ENCODE measurements at regions of chr9 and their contacts with region 1.

Region 1: GRCh38 chr9:107340920-107341632 is 58.0 kb downstream of the RAD23B start:
- DNase-seq: peak; percentile 20 to 95 (median 72)
- ATAC-seq: peak; percentile 83
- H3K4me3 ChIP-seq: no peak overlapping the region
- H3K27ac ChIP-seq: no peak overlapping the region
- H3K4me1 ChIP-seq: peaks cover 0 to 6% of the 10 kb centered on the region in 2 donors
- H3K27me3 ChIP-seq: no peaks in the 10 kb centered on the region
- CTCF ChIP-seq: peak; percentile 74 to 85

Region 2: GRCh38 chr9:107094370-107094769 is 246.7 kb before region 1 on chr9:
- intact Hi-C with region 1: no loop called
- DNase-seq: no peak
- ATAC-seq: no peak
- H3K4me3 ChIP-seq: no peak overlapping the region
- H3K27ac ChIP-seq: no peak overlapping the region
- H3K4me1 ChIP-seq: no peaks in the 10 kb centered on the region
- H3K27me3 ChIP-seq: no peaks in the 10 kb centered on the region
- CTCF ChIP-seq: no peak

Region 3: DNA sequence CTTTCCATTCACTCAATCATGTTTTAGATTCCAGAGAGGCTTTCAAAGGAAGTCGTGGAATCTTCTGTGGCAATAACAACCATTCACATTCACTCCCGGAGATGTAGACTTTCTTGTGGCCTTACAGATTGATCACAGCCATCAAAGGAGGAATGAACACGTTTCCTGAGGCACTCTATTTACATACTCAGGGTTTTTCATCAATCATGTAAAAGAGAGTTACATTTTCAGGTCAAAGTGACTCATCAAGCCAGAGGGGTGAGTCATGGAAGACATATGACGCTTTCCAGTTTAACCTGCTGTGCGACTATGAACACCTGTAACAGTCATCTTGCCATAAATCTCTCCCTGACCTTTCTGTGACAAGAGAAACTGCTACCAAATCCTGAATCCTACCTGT is 97.3 kb before region 1 on chr9:
- intact Hi-C with region 1: loop called in 1 of 2 experiments (anchors 10 kb)
- DNase-seq: no peak
- ATAC-seq: peak; percentile 80
- H3K4me3 ChIP-seq: no peak overlapping the region
- H3K27ac ChIP-seq: no peak overlapping the region
- H3K4me1 ChIP-seq: no peaks in the 10 kb centered on the region
- H3K27me3 ChIP-seq: no peaks in the 10 kb centered on the region
- CTCF ChIP-seq: no peak

Region 4: DNA sequence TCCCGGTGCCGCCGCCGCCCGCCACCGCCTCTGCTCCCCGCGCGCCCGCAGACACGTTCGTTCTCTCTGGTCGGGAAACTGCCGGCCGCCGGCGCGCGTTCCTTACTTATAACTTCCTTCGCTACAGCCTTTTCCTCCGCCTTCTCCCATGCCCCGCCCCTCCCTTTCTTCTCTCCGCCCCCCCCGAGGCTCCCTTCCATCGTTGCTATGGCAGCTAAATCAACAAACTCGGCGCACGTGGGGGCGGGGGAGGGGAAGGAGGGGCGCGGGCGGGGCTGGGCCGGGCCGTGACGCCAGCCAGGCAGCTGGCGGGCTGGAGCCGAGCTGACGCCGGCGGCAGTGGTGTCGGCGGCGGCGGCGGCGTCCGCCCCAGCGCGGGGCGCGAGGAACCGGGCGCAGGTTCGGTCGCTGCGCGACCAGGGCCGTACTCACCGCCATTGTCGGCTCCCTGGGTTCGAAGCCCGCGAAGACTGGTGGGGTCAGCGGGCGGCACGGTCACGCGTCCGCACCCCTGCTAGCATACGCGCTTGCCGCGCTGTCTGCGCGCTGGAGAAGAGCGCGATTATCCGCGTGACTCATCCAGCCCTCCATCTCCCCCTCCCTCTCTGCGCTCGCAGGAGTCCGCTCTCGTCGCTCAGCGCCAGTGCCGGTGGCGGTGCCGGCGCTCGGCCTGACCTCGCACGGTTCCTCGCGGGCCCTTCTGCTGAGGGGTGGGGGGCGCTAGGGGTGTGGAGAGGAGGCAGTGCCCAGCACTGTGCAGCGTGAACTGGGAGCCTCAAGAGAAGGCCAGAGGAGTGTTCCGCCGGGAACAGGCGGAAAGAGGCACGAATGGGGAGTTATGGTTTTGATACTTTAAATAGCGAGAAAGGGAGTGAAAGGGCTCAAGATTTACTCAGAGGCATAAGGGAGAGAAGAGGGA is 148.9 kb after region 1 on chr9 and contains the start of gene KLF4:
- intact Hi-C with region 1: no loop called
- DNase-seq: peak; percentile 90 to 96 (median 94)
- ATAC-seq: peak; percentile 80
- H3K4me3 ChIP-seq: peak within 1 kb of the TSS; percentile 59 to 85
- H3K27ac ChIP-seq: peak within 1 kb of the TSS; percentile 89 to 96
- H3K4me1 ChIP-seq: peaks cover 10 to 46% of the 10 kb centered on the region in 2 donors
- H3K27me3 ChIP-seq: peaks cover 0 to 62% of the 10 kb centered on the region in 2 donors
- CTCF ChIP-seq: no peak
- polyA plus RNA-seq, gene KLF4: 12.3 to 89.6 (median 53.3) TPM

Measured in left lung (tissue), 14 donors.